Heart right ventricle (tissue), 16 donors: ENCODE measurements at regions of chr18 and their contacts with region 1.

Region 1: DNA sequence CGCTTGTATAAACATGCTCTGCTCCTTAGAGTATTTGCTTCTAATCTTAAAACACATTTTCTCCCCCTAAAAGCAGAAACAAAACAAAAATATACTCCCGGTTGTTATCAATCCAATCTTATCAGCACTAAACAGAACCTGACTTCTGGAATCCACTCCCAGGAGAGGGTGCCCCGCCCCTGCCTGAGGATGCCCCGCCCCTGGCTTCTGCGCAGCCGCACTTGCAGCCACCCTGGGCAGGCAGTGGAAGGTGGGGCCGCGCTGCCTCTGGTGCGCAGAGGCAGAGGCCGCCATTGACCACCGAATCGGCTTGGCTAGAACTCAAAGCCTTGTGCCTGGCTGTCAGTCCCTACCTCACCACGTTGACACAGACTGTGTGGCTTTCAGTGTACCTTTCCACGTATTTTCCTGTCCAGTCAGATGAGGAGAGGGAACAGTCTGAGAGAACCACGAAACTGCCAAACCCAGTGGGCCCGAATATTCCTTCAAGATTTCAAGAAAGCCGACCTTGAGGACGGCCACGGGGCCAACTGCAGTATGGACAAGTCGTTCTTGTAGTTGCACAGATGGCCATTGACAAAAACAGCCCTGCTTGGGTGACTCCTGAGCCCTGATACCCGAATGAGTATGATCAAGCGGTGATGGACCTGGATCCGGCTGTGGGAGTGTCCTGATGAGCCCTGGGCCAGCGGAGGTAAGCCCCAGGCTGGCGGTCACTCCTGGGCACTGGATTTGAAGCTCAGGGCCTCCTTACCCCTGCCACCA is 46.2 kb upstream of the ARHGAP28 start:
- DNase-seq: peak; percentile 51 to 66
- ATAC-seq: peak in 7 of 8 donors; percentile 31 to 97 (median 85)
- H3K4me3 ChIP-seq: peak overlapping the region in 2 of 10 donors; percentile 16 to 19
- H3K27ac ChIP-seq: peak overlapping the region in 1 of 10 donors; percentile 51
- H3K4me1 ChIP-seq: peaks cover 0 to 7% (median 3%) of the 10 kb centered on the region in 9 donors
- H3K27me3 ChIP-seq: peaks cover 0 to 8% (median 0%) of the 10 kb centered on the region in 7 donors
- CTCF ChIP-seq: no peak

Region 2: DNA sequence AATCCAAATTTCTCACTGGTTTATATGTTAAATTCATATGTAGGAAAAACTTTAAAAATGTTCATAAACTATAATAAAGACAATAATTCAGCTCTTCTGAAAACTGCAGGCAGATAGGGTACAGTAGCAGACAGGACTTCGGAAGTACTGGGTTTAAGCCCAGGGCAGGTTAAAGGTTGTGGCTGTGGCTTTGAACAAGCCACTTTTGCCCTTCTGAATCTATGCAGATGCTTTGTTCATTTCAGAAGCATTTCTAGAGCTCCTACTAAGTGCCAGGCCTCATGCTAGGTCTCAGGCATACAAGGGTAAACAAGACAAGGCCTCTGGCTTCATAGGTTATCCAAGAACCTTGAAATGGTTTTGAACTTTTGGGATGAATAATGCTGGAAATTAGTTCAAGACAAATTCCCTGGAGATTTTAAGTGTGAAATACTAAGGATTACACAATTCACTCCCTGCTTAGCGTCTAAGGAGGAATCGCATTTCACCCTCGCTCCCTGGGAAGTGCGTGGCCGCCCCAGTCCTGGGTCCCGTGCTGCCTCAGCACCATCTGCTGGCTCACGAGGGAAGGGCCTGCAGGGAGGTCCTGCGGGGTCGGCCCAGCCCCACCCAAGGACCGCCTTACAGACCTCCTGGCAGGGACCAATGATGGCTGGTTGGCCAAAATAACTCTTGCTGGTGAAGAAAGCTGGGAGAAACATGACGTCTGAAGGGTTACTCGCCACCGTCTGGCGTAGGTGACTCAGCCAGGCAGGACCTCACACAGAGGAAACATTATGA is 200.9 kb before region 1 on chr18:
- intact Hi-C with region 1: no loop called
- DNase-seq: peak; percentile 54 to 75
- ATAC-seq: peak; percentile 94 to 99 (median 96)
- H3K4me3 ChIP-seq: no peak overlapping the region
- H3K27ac ChIP-seq: no peak overlapping the region
- H3K4me1 ChIP-seq: peaks cover 0 to 23% (median 0%) of the 10 kb centered on the region in 9 donors
- H3K27me3 ChIP-seq: peaks cover 0 to 7% (median 0%) of the 10 kb centered on the region in 7 donors
- CTCF ChIP-seq: peak; percentile 63 to 93 (median 84)

Region 3: DNA sequence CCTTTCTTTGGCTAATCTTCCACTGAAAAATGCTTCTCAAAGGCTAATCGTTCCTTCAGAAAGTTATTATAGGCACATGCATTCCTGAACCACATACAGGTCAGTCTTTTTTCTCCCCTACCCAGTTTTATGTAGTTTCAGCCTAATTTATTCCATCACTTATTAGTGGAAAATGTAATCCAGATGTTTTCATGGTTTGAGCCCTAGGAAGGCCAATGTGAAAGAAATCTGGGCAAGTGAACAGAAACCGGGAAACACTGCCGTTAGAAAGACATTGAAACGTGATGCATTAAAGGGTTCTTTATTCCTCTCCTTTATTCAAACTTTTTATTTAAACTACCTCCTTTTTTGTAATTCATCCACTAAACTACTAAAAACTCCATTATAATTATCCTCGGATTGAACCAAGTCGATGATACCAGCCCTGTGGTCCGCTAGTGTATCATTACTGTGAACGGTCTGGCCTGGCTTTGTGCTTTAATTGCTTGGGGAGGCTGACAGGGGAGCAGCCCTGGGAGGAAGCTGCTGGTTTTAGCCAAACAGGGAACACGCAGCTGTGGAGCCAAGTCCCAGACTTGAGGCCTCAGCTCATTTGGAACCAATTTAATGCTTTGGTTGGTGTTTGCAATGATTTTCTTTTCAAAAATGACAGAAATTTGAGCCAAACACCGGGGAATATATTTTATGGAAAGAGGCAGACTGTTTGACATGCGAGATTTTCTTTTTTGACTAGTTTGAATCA is 195.4 kb after region 1 on chr18:
- intact Hi-C with region 1: loop called in 1 of 10 experiments (anchors 10 kb)
- DNase-seq: peak in 1 of 2 donors; percentile 31
- ATAC-seq: peak in 4 of 8 donors; percentile 49 to 67 (median 58)
- H3K4me3 ChIP-seq: no peak overlapping the region
- H3K27ac ChIP-seq: no peak overlapping the region
- H3K4me1 ChIP-seq: peaks cover 0 to 13% (median 0%) of the 10 kb centered on the region in 9 donors
- H3K27me3 ChIP-seq: no peaks in the 10 kb centered on the region
- CTCF ChIP-seq: no peak